ENCODE measurements at regions of chr7 and their contacts with region 1.

Region 1: DNA sequence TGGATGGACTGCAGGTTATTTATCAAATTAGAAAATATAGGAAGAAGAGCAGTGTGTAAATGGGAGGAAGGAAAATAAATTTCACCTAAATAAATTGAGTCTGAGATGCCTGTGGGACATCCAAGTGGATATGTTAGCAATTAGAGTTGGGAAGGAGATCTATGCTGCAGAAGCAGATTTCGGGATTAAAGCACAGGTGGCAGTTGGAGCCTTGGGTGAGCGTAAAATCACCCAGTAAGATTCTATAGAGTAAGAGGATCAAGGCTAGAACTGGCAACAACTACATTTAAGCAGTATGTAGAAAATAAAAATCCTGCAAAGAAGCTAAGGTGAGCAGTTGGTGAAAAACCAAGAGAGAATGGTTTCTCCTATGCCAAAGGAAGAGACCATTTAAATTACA is 8.4 kb downstream of the TRIM4 start:
- DNase-seq: no peak
- H3K4me3 ChIP-seq: no peak overlapping the region
- H3K27ac ChIP-seq: no peak overlapping the region
- H3K4me1 ChIP-seq: peaks cover 0 to 9% (median 4%) of the 10 kb centered on the region in 4 donors
- H3K27me3 ChIP-seq: no peaks in the 10 kb centered on the region
- CTCF ChIP-seq: no peak
- EP300 ChIP-seq: no peak
- POLR2A ChIP-seq: no peak

Region 2: GRCh38 chr7:99990460-99990852 is 79.5 kb after region 1 on chr7:
- intact Hi-C with region 1: loop called (anchors 5 kb)
- DNase-seq: no peak
- H3K4me3 ChIP-seq: peak overlapping the region in 1 of 4 donors; percentile 29
- H3K27ac ChIP-seq: peak overlapping the region in 1 of 4 donors; percentile 35
- H3K4me1 ChIP-seq: peaks cover 0 to 17% (median 6%) of the 10 kb centered on the region in 4 donors
- H3K27me3 ChIP-seq: no peaks in the 10 kb centered on the region
- CTCF ChIP-seq: no peak
- EP300 ChIP-seq: no peak
- POLR2A ChIP-seq: no peak

Measured in sigmoid colon (tissue), 7 donors.